CD8-positive, alpha-beta T cell (primary cell): ENCODE measurements at regions of chr11 and their contacts with region 1.

Region 1: DNA sequence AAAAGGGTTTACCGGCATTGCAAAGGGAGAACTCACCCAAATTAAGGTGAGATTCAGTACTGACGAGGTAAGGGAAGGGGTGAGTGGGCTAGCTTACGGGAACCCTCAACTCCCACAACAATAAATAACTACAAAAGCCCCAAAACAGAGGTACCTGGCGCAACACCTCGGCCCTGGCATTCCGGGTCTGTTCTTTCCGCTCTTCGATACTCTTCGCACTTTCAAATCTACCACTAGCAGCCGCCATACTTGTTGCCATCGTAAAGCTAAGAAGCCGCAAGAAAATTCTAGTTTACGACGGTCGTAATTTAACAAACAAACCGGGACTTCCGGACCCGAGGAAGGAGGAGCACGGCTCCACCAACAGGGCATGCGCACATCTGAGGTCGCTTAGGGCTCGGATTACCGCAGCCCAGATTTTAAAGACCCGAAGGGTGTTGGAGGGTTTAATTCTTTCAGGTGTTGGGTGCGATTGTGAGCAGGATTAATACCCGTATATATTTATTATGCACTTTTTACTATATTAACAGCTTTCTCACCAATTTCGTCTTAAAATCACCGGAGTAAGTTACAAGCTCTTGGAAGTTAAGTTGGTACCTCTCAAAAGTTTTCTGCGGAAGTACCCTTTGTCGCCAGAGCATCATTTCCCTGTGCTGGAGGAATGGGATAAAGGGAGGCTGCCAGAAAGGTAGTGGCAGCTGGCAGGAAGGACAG is at the start of gene CWF19L2:
- DNase-seq: peak; percentile 80 to 96 (median 88)
- ATAC-seq: peak; percentile 96
- H3K4me3 ChIP-seq: peak within 1 kb of the TSS; percentile 70 to 82
- H3K4me3 Mint-ChIP-seq: peak within 1 kb of the TSS; percentile 92
- H3K27ac ChIP-seq: peak within 1 kb of the TSS; percentile 73 to 81
- H3K27ac Mint-ChIP-seq: peak within 1 kb of the TSS; percentile 94
- H3K4me1 ChIP-seq: peaks cover 7% of the 10 kb centered on the region
- H3K4me1 Mint-ChIP-seq: peaks cover 32% of the 10 kb centered on the region
- H3K27me3 ChIP-seq: no peaks in the 10 kb centered on the region
- H3K27me3 Mint-ChIP-seq: peaks cover 2% of the 10 kb centered on the region
- CTCF ChIP-seq: no peak
- total RNA-seq, gene CWF19L2: 24.3 to 25.2 TPM

Region 2: GRCh38 chr11:107785401-107785800 is 327.7 kb after region 1 on chr11:
- CTCF ChIA-PET with region 1: no interaction called
- POLR2A ChIA-PET with region 1: no interaction called
- intact Hi-C with region 1: no loop called
- DNase-seq: no peak
- ATAC-seq: no peak
- H3K4me3 ChIP-seq: no peak overlapping the region
- H3K4me3 Mint-ChIP-seq: no peak overlapping the region
- H3K27ac ChIP-seq: no peak overlapping the region
- H3K27ac Mint-ChIP-seq: no peak overlapping the region
- H3K4me1 ChIP-seq: no peaks in the 10 kb centered on the region
- H3K4me1 Mint-ChIP-seq: no peaks in the 10 kb centered on the region
- H3K27me3 ChIP-seq: no peaks in the 10 kb centered on the region
- H3K27me3 Mint-ChIP-seq: peaks cover 16% of the 10 kb centered on the region
- CTCF ChIP-seq: no peak

Region 3: DNA sequence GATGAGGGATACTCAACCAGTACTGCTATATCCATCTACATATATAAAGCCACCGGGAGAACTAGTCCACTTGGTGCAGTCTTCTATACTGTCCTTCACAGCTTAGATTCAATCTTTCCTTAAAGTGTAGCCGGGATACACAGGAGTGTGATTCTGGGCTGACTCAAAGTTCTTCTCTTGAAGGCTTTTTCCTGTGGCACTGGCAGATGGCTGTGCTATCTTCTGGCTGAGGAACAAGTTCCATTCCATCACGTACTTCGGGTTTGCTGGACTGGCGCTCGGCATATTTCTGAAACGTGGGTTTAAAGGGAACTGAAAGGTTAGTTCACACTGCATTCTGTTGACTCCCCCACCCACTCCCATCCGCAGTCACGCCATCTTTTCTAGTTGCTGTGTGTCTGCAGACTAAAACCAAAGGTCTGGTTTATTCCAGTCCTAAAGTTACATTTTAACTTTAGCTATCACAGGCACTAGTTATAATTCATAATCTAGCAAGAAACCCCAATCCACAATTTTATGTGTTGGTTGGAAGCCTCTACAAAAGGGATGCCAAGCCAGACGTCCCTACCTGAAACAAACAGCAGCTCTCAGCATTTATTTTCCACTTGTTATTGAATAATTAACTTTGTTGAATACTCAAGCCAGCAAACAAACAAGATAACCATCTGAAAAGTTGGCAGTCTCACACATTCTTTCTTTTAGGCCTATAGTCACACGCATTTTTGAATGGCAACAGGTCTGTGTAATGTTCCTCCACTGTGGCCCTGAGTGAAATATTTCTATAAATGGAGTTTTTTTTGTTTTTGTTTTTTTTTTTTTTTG is 1017.2 kb after region 1 on chr11:
- CTCF ChIA-PET with region 1: no interaction called
- POLR2A ChIA-PET with region 1: no interaction called
- intact Hi-C with region 1: loop called in 1 of 2 experiments (anchors 10 kb)
- DNase-seq: no peak
- ATAC-seq: no peak
- H3K4me3 ChIP-seq: no peak overlapping the region
- H3K4me3 Mint-ChIP-seq: no peak overlapping the region
- H3K27ac ChIP-seq: no peak overlapping the region
- H3K27ac Mint-ChIP-seq: no peak overlapping the region
- H3K4me1 ChIP-seq: no peaks in the 10 kb centered on the region
- H3K4me1 Mint-ChIP-seq: no peaks in the 10 kb centered on the region
- H3K27me3 ChIP-seq: no peaks in the 10 kb centered on the region
- H3K27me3 Mint-ChIP-seq: no peaks in the 10 kb centered on the region
- CTCF ChIP-seq: no peak